Gastrocnemius medialis (tissue), 4 donors: ENCODE measurements at regions of chr14 and their contacts with region 1.

Region 1: GRCh38 chr14:50231475-50232275 is at the start of gene SOS2:
- DNase-seq: peak; percentile 74 to 86
- ATAC-seq: peak; percentile 79 to 84
- H3K4me3 ChIP-seq: peak within 1 kb of the TSS; percentile 74 to 98 (median 86)
- H3K27ac ChIP-seq: peak within 1 kb of the TSS; percentile 91 to 99 (median 97)
- H3K4me1 ChIP-seq: peaks cover 51 to 53% of the 10 kb centered on the region in 2 donors
- H3K27me3 ChIP-seq: no peaks in the 10 kb centered on the region
- CTCF ChIP-seq: peak in 1 of 5 experiments; percentile 33
- POLR2A ChIP-seq: peak; percentile 91 to 95
- total RNA-seq, gene SOS2: 46.5 to 81.2 (median 52.3) TPM

Region 2: GRCh38 chr14:49862089-49862673 is 369.5 kb before region 1 on chr14:
- in situ Hi-C with region 1: loop called in 2 of 4 experiments (anchors 10 kb)
- intact Hi-C with region 1: loop called (anchors 5 kb)
- DNase-seq: peak; percentile 69 to 82
- ATAC-seq: peak; percentile 50 to 51
- H3K4me3 ChIP-seq: peak overlapping the region; percentile 61 to 89 (median 76)
- H3K27ac ChIP-seq: peak overlapping the region; percentile 91 to 99 (median 98)
- H3K4me1 ChIP-seq: peaks cover 21 to 26% of the 10 kb centered on the region in 2 donors
- H3K27me3 ChIP-seq: no peaks in the 10 kb centered on the region
- CTCF ChIP-seq: peak; percentile 97 to 100 (median 100)
- POLR2A ChIP-seq: no peak

Region 3: GRCh38 chr14:49892636-49893308 is 338.9 kb before region 1 on chr14 and contains the start of gene ARF6:
- in situ Hi-C with region 1: no loop called
- intact Hi-C with region 1: loop called (anchors 2 kb)
- DNase-seq: peak; percentile 98 to 99
- ATAC-seq: peak; percentile 89 to 90
- H3K4me3 ChIP-seq: peak within 1 kb of the TSS; percentile 66 to 93 (median 89)
- H3K27ac ChIP-seq: peak within 1 kb of the TSS; percentile 96 to 100 (median 98)
- H3K4me1 ChIP-seq: peaks cover 39 to 46% of the 10 kb centered on the region in 2 donors
- H3K27me3 ChIP-seq: no peaks in the 10 kb centered on the region
- CTCF ChIP-seq: peak in 3 of 5 experiments; percentile 11 to 22 (median 20)
- POLR2A ChIP-seq: peak; percentile 98 to 99
- total RNA-seq, gene ARF6: 20.7 to 40.0 (median 30.8) TPM

Region 4: DNA sequence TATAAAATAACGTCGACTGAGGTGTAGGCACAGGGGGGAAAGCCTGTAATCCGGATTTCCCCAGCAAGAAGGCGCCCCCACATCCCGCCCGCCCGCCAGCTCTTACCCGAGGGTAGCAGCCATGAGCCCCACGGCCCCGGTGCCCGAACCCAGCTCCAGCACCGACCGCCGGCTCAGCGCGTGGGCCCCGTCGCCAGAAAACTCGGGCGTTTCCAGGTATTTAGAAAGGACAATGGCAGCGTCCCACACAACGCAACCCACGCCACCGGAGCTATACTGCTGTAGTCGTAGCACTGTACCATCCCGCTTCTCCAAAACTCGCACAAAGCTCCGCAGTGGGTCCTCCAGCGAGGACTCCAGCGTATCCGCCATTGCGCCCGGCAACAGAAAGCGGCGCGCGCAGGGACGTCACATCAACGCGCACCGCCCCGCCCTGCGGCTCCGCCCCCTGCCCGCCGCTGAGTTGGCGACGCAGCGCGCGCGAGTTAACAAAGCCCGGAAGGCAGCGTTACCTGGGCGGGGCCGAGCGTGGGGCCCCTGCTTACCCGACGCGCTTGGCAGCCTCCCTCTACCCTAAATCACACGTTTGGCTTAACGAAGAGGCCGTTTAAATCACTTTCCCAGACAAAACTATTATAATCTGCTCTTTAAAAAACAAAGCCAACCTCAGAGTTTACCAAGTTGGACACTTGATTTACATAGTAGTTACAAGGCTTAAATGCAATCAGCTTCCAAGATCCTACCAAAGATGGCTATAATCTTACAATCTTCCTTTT is 115.3 kb before region 1 on chr14 and contains the start of gene VCPKMT:
- in situ Hi-C with region 1: no loop called
- intact Hi-C with region 1: loop called (anchors 10 kb)
- DNase-seq: peak; percentile 82 to 90
- ATAC-seq: peak; percentile 94 to 95
- H3K4me3 ChIP-seq: peak within 1 kb of the TSS; percentile 75 to 87 (median 82)
- H3K27ac ChIP-seq: peak within 1 kb of the TSS; percentile 86 to 92 (median 90)
- H3K4me1 ChIP-seq: peaks cover 14% of the 10 kb centered on the region in 2 donors
- H3K27me3 ChIP-seq: no peaks in the 10 kb centered on the region
- CTCF ChIP-seq: peak in 1 of 5 experiments; percentile 7
- POLR2A ChIP-seq: peak; percentile 77 to 86
- total RNA-seq, gene VCPKMT: 2.2 to 7.3 (median 4.9) TPM

Region 5: GRCh38 chr14:50311975-50312733 is 80.5 kb after region 1 on chr14 and contains the starts of genes DMAC2L and L2HGDH:
- in situ Hi-C with region 1: no loop called
- intact Hi-C with region 1: loop called (anchors 2 kb)
- DNase-seq: peak; percentile 85 to 92
- ATAC-seq: peak; percentile 91 to 95
- H3K4me3 ChIP-seq: peak within 1 kb of the TSS; percentile 61 to 92 (median 86)
- H3K27ac ChIP-seq: peak within 1 kb of the TSS; percentile 94 to 98 (median 96)
- H3K4me1 ChIP-seq: peaks cover 18% of the 10 kb centered on the region in 2 donors
- H3K27me3 ChIP-seq: no peaks in the 10 kb centered on the region
- CTCF ChIP-seq: peak in 3 of 5 experiments; percentile 10 to 78 (median 34)
- POLR2A ChIP-seq: peak; percentile 79 to 83
- total RNA-seq, gene DMAC2L: 18.6 to 42.2 (median 24.6) TPM
- total RNA-seq, gene L2HGDH: 8.6 to 13.4 (median 10.9) TPM

Region 6: DNA sequence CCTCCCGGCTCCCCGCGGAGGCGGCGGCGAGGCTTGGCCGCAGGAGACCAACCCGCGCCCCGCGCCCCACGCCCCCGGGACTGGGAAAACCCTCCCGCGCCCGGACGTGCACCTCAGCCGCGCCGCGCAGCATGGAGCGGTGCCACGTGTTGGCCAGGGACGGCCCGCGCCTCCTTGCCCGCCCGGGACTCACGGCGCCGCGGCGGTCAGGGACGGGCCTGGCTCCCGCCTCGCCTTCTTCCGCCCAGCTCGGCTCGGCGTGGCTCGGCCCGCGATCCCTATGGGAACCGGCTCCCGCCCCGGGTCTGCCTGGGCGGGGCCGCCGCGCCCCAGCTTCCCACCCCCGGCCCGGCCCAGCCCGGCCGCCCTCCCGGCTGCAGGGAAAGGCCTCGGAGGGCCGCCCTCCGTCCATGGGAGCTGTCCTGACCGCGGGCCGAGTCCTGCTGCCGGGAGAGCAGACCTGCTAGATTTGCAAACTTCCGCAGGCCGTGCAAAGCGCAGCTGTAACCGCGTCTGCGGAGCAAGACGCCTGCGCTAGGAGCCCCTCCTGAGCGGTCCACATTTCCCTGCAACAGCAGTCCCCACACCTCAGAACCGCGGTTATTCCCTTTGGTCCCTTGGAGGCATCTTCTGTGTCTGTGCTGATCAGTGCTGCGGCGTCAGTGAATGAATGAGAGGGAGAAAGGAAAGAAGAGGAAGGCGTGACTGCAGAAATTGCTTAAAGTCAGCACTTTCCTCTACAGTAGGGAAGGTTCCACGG is 165.1 kb after region 1 on chr14 and contains the start of gene CDKL1:
- in situ Hi-C with region 1: no loop called
- intact Hi-C with region 1: loop called (anchors 10 kb)
- DNase-seq: peak; percentile 9 to 27
- ATAC-seq: peak; percentile 74 to 75
- H3K4me3 ChIP-seq: peak within 1 kb of the TSS; percentile 59 to 95 (median 67)
- H3K27ac ChIP-seq: peak within 1 kb of the TSS; percentile 66 to 70 (median 68)
- H3K4me1 ChIP-seq: peaks cover 10 to 13% of the 10 kb centered on the region in 2 donors
- H3K27me3 ChIP-seq: no peaks in the 10 kb centered on the region
- CTCF ChIP-seq: no peak
- POLR2A ChIP-seq: peak in 1 of 2 donors; percentile 13
- total RNA-seq, gene CDKL1: 0.59 to 2.0 (median 1.4) TPM

Region 7: DNA sequence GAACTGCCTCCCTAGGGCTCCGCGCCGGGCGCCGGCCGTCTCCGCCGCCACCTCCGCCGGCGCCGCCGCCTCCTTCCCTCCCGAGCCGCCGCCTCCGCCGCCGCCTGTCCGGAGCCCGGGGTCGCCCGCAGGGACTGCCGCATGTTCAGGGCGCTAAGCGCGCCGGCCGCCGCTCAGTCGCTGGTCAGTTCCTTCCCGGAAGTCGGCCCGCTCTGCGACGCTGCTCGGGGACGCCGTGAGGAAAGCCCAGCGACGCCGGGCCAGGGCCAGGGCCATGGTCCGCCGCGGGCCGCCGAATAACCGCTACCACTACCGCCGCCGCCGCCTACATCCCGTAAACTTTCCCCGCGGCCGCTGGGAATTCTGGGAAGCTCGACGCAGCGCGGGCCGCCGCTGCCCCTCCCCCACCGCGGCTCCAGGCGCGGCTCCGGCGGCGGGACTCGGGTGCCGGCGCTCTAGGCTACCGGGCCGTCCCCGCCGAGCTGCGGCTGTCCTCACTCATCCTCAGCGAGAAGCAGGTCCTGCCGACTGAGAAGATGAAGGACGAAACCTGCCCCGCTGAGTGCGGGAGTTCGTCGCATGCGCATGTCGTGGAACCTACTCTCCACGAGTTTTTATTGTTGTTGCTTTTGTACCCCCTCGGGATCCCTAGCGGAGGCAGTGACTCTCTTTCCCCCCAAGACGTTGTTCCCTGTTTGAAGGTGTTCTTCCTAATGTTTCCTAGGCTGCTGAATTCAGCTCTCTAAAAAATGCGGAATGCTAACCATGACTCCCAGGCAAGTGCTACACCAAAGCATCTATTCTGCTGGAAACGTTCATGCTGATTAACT is 436.5 kb after region 1 on chr14 and contains the start of gene SAV1:
- in situ Hi-C with region 1: no loop called
- intact Hi-C with region 1: loop called (anchors 5 kb)
- DNase-seq: peak; percentile 72 to 82
- ATAC-seq: peak; percentile 87 to 90
- H3K4me3 ChIP-seq: peak within 1 kb of the TSS; percentile 65 to 95 (median 80)
- H3K27ac ChIP-seq: peak within 1 kb of the TSS; percentile 89 to 97 (median 96)
- H3K4me1 ChIP-seq: peaks cover 27 to 29% of the 10 kb centered on the region in 2 donors
- H3K27me3 ChIP-seq: no peaks in the 10 kb centered on the region
- CTCF ChIP-seq: peak in 1 of 5 experiments; percentile 7
- POLR2A ChIP-seq: peak; percentile 93 to 94
- total RNA-seq, gene SAV1: 18.3 to 68.7 (median 36.8) TPM